ENCODE measurements at regions of chr17 and their contacts with region 1.

Region 1: GRCh38 chr17:8222630-8223356 is 12.4 kb upstream of the AURKB start:
- DNase-seq: peak; percentile 90
- ATAC-seq: peak; percentile 40
- H3K4me3 Mint-ChIP-seq: peak overlapping the region; percentile 93
- H3K27ac Mint-ChIP-seq: peak overlapping the region; percentile 95
- H3K4me1 Mint-ChIP-seq: peaks cover 52% of the 10 kb centered on the region
- H3K27me3 Mint-ChIP-seq: peaks cover 2% of the 10 kb centered on the region

Region 2: GRCh38 chr17:8118769-8119580 is 103.8 kb before region 1 on chr17:
- POLR2A ChIA-PET with region 1: interaction called, 14 read pairs
- DNase-seq: peak; percentile 90
- ATAC-seq: peak; percentile 68
- H3K4me3 Mint-ChIP-seq: peak overlapping the region; percentile 91
- H3K27ac Mint-ChIP-seq: peak overlapping the region; percentile 92
- H3K4me1 Mint-ChIP-seq: peaks cover 46% of the 10 kb centered on the region
- H3K27me3 Mint-ChIP-seq: peaks cover 61% of the 10 kb centered on the region

Region 3: DNA sequence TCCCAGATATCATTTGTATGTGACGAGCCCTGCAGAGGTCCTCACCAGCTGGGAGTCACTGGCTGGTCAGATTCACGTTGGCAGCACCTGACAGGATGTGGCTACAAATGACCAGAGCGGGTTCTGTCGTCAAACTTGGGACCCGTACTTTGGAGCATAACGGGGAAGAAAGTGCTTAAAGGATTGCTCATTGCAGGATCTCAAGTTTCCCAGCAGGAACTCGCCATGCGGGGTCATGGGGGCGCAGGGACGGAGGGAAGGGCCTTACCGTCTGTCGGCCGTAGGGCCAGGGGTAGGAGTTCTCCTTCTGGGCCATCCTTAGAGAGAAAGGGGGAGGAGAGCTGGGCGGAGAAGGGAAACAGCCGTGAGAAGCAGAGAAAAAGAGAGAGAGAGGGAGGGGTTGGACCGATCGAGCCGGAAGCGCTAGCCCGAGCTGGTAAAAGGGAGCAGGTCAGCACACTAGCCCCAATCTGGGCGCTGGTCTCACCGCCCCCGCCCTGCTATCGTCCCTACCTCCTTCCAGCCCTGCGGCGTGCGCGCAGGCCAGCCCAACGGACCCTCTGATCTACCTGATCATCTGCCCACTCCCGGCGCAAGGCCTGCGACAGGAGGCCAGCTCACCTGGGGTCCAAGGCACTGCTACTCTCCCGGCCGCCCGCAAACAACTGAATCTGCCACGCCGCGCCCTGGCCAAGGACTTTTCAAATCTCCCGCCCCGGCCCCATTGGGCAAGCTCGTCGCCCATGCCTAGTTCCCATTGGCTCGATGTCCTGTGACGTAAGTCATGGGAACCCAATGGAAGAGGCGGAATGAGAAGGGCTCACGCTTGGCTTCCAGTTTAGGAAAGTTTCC is 12.7 kb before region 1 on chr17 and contains the start of gene AURKB:
- POLR2A ChIA-PET with region 1: interaction called, 87 read pairs
- DNase-seq: peak; percentile 87
- ATAC-seq: peak; percentile 97
- H3K4me3 Mint-ChIP-seq: peak within 1 kb of the TSS; percentile 96
- H3K27ac Mint-ChIP-seq: peak within 1 kb of the TSS; percentile 92
- H3K4me1 Mint-ChIP-seq: peaks cover 27% of the 10 kb centered on the region
- H3K27me3 Mint-ChIP-seq: peaks cover 3% of the 10 kb centered on the region
- total RNA-seq, gene AURKB: 128 to 152 TPM

Region 4: DNA sequence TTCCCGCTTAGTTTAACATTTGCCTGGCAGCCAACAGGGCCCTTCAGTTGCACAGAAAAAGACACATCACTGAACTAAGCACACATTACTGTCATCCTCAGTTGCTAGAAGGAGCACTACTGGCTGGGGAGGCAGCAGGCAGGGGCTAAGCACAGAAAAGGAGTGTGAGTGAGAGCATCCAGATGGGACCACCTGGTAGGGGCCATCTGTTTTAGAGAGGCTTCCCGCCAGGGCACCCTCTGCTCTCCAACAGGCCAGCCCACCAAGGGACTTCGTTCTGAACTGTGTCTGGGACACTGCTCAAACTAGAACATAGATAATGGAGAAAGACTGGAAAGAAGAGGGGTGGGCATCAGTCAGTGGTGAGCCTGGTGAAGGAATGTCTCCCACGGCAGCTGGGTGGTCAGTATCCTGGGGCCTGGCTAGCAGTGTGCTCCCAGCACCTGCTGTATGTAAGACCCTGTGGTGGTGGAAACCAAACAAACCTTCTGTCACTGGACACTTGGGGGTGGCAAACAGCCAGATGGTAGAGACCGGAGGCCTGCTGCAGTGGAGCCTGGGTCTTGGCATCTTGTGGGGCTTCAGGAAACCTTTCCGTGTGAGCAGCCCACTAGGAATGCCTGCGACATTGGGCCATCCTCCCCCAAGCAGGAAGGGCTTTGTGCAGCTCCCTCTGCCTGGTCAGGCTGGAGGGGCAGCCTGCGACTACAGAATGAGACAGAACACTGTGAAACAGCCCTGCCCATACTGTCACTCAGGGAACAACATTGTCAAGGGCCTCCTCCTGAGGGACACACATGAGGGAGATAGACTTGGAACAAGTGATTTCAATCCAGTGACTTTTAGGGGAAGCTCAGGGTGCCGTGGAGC is 52.9 kb after region 1 on chr17:
- POLR2A ChIA-PET with region 1: no interaction called
- DNase-seq: no peak
- ATAC-seq: no peak
- H3K4me3 Mint-ChIP-seq: no peak overlapping the region
- H3K27ac Mint-ChIP-seq: no peak overlapping the region
- H3K4me1 Mint-ChIP-seq: no peaks in the 10 kb centered on the region
- H3K27me3 Mint-ChIP-seq: no peaks in the 10 kb centered on the region

Region 5: GRCh38 chr17:8288336-8289102 is 65.7 kb after region 1 on chr17 and contains the start of gene RANGRF:
- POLR2A ChIA-PET with region 1: interaction called, 28 read pairs
- DNase-seq: peak; percentile 87
- ATAC-seq: peak; percentile 91
- H3K4me3 Mint-ChIP-seq: peak within 1 kb of the TSS; percentile 99
- H3K27ac Mint-ChIP-seq: peak within 1 kb of the TSS; percentile 96
- H3K4me1 Mint-ChIP-seq: peaks cover 31% of the 10 kb centered on the region
- H3K27me3 Mint-ChIP-seq: no peaks in the 10 kb centered on the region
- total RNA-seq, gene RANGRF: 43.6 to 44.9 TPM

Region 6: DNA sequence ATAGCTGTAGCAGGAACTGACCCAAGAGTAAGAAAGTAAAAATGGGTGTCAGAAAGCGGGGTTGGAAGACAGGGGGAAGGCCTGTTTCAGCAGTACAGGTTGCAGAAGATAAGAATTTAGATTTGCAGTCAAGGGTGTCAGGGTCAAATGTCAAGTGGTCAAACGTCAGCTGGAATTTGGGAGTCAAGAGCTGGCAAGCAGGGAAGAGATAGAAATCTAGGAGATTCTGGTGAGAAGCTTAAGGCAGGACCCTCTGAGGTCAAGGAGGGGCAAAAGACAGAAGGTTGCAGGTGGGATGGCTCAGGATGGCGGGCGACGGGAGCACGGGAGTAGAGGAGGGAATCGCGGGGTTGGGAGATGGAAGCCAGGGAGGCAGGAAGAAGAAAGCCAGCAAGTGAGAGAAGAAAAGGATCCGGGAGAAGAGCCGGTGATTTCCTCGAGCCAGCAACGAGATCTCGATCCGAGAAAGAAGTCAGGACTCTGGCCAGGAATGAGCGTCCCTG is 72.1 kb after region 1 on chr17:
- POLR2A ChIA-PET with region 1: interaction called, 32 read pairs
- DNase-seq: no peak
- ATAC-seq: no peak
- H3K4me3 Mint-ChIP-seq: peak overlapping the region; percentile 96
- H3K27ac Mint-ChIP-seq: peak overlapping the region; percentile 92
- H3K4me1 Mint-ChIP-seq: peaks cover 32% of the 10 kb centered on the region
- H3K27me3 Mint-ChIP-seq: no peaks in the 10 kb centered on the region

Measured in activated naive CD8-positive, alpha-beta T cell treated with anti-CD3 and anti-CD28 coated beads, Interleukin-2, amount 10 ng/mL, durations not matched to agents 7 days and 5 days (primary cell).